CD4-positive, alpha-beta T cell (primary cell): ENCODE measurements at regions of chr19 and their contacts with region 1.

Region 1: GRCh38 chr19:48965040-48965805 is at the start of gene FTL:
- DNase-seq: peak; percentile 71 to 94 (median 88)
- ATAC-seq: peak; percentile 78
- H3K4me3 ChIP-seq: peak within 1 kb of the TSS; percentile 85
- H3K4me3 Mint-ChIP-seq: peak within 1 kb of the TSS; percentile 97
- H3K27ac ChIP-seq: peak within 1 kb of the TSS; percentile 67 to 71
- H3K27ac Mint-ChIP-seq: peak within 1 kb of the TSS; percentile 97
- H3K4me1 ChIP-seq: peaks cover 55% of the 10 kb centered on the region
- H3K4me1 Mint-ChIP-seq: peaks cover 47% of the 10 kb centered on the region
- H3K27me3 ChIP-seq: peaks cover 0 to 2% of the 10 kb centered on the region in 2 experiments
- H3K27me3 Mint-ChIP-seq: no peaks in the 10 kb centered on the region
- CTCF ChIP-seq: no peak
- total RNA-seq, gene FTL: 616 to 627 TPM

Region 2: GRCh38 chr19:48795055-48795684 is 170.1 kb before region 1 on chr19:
- CTCF ChIA-PET with region 1: interaction called, 19 read pairs
- POLR2A ChIA-PET with region 1: interaction called, 13 read pairs
- intact Hi-C with region 1: loop called (anchors 2 kb)
- DNase-seq: peak; percentile 72 to 93 (median 76)
- ATAC-seq: peak; percentile 97
- H3K4me3 ChIP-seq: peak overlapping the region; percentile 59
- H3K4me3 Mint-ChIP-seq: peak overlapping the region; percentile 96
- H3K27ac ChIP-seq: peak overlapping the region in 1 of 2 donors; percentile 23
- H3K27ac Mint-ChIP-seq: peak overlapping the region; percentile 90
- H3K4me1 ChIP-seq: peaks cover 14% of the 10 kb centered on the region
- H3K4me1 Mint-ChIP-seq: peaks cover 10% of the 10 kb centered on the region
- H3K27me3 ChIP-seq: no peaks in the 10 kb centered on the region
- H3K27me3 Mint-ChIP-seq: no peaks in the 10 kb centered on the region
- CTCF ChIP-seq: peak; percentile 99

Region 3: DNA sequence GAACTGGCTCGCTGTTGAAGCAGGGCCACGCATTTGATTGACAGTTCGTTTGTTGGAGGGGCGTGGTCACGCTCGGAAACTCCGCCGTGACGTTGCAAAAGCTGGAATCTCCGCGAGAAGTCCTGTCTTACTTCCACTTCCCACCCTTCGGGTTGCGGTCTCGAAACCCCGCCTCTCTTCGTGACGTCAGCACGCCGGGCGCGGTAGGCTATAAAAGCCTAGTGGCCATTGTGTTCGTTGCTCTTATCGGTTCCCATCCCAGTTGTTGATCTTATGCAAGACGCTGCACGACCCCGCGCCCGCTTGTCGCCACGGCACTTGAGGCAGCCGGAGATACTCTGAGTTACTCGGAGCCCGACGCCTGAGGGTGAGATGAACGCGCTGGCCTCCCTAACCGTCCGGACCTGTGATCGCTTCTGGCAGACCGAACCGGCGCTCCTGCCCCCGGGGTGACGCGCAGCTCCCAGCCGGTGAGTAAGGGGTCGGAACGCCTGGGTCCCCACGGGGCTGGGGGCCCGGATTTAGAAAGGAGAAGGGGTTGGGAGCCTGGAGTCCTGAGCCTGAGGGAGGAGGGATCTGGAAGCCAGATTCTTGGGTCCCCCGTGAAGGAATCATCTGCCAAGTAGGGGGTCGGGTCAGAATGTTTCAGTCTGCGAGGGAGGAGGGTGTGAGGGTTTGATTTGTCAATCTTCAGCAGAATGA is 92.9 kb before region 1 on chr19 and contains the start of gene PPP1R15A:
- CTCF ChIA-PET with region 1: no interaction called
- POLR2A ChIA-PET with region 1: interaction called, 29 read pairs
- intact Hi-C with region 1: loop called (anchors 2 to 5 kb)
- DNase-seq: peak; percentile 94 to 100 (median 99)
- ATAC-seq: peak; percentile 33
- H3K4me3 ChIP-seq: peak within 1 kb of the TSS; percentile 100
- H3K4me3 Mint-ChIP-seq: peak within 1 kb of the TSS; percentile 96
- H3K27ac ChIP-seq: peak within 1 kb of the TSS; percentile 100
- H3K27ac Mint-ChIP-seq: peak within 1 kb of the TSS; percentile 98
- H3K4me1 ChIP-seq: peaks cover 45% of the 10 kb centered on the region
- H3K4me1 Mint-ChIP-seq: peaks cover 45% of the 10 kb centered on the region
- H3K27me3 ChIP-seq: peaks cover 0 to under 1% of the 10 kb centered on the region in 2 experiments
- H3K27me3 Mint-ChIP-seq: no peaks in the 10 kb centered on the region
- CTCF ChIP-seq: no peak
- total RNA-seq, gene PPP1R15A: 569 to 584 TPM

Region 4: DNA sequence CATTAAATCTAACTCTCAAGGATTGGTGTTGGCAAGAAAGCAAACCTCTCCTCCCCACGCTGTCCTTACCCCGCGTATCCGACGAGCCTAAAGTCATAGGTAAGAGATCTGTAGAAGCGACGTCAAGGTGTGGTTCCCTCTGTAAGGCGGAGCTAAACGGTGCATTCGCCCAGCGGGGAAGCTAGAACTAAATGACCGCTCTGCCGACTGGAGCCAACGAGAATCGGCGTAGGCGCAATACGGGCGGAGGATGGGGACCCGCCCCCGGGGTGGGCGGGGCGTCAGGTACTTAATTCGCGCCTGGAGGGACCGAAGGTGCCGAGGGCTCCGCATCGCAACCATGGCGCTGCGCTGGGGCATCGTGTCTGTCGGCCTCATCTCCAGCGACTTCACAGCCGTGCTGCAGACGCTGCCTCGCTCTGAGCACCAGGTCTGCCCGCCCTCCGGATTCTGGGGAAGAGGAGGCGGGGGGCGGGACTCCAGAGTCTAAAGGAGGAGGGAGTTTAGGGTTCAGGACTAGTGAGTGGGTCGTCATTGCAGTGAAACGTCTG is 31.8 kb before region 1 on chr19 and contains the start of gene DHDH:
- CTCF ChIA-PET with region 1: no interaction called
- POLR2A ChIA-PET with region 1: interaction called, 12 read pairs
- intact Hi-C with region 1: loop called in 1 of 2 experiments (anchors 5 kb)
- DNase-seq: peak; percentile 77 to 96 (median 86)
- ATAC-seq: peak; percentile 96
- H3K4me3 ChIP-seq: peak within 1 kb of the TSS; percentile 63
- H3K4me3 Mint-ChIP-seq: peak within 1 kb of the TSS; percentile 82
- H3K27ac ChIP-seq: peak within 1 kb of the TSS in 1 of 2 donors; percentile 25
- H3K27ac Mint-ChIP-seq: peak within 1 kb of the TSS; percentile 77
- H3K4me1 ChIP-seq: peaks cover 14% of the 10 kb centered on the region
- H3K4me1 Mint-ChIP-seq: peaks cover 20% of the 10 kb centered on the region
- H3K27me3 ChIP-seq: no peaks in the 10 kb centered on the region
- H3K27me3 Mint-ChIP-seq: no peaks in the 10 kb centered on the region
- CTCF ChIP-seq: no peak
- total RNA-seq, gene DHDH: 1.1 to 1.8 TPM

Region 5: GRCh38 chr19:48975947-48976847 is 11.0 kb after region 1 on chr19:
- CTCF ChIA-PET with region 1: no interaction called
- POLR2A ChIA-PET with region 1: interaction called, 12 read pairs
- intact Hi-C with region 1: no loop called
- DNase-seq: peak in 7 of 14 experiments; percentile 23 to 67 (median 41)
- ATAC-seq: peak; percentile 88
- H3K4me3 ChIP-seq: no peak overlapping the region
- H3K4me3 Mint-ChIP-seq: no peak overlapping the region
- H3K27ac ChIP-seq: no peak overlapping the region
- H3K27ac Mint-ChIP-seq: no peak overlapping the region
- H3K4me1 ChIP-seq: no peaks in the 10 kb centered on the region
- H3K4me1 Mint-ChIP-seq: peaks cover under 1% of the 10 kb centered on the region
- H3K27me3 ChIP-seq: no peaks in the 10 kb centered on the region
- H3K27me3 Mint-ChIP-seq: no peaks in the 10 kb centered on the region
- CTCF ChIP-seq: no peak